ENCODE measurements at regions of chr1 and their contacts with region 1.

Region 1: GRCh38 chr1:167936068-167936929 is at the start of gene DCAF6:
- DNase-seq: peak; percentile 91 to 98
- H3K4me3 ChIP-seq: peak within 1 kb of the TSS; percentile 91
- H3K27ac ChIP-seq: peak within 1 kb of the TSS; percentile 96 to 98
- H3K4me1 ChIP-seq: peaks cover 0 to 14% of the 10 kb centered on the region in 2 donors
- H3K27me3 ChIP-seq: no peaks in the 10 kb centered on the region
- CTCF ChIP-seq: no peak
- total RNA-seq, gene DCAF6: 9.8 TPM

Region 2: GRCh38 chr1:167715157-167715999 is 220.9 kb before region 1 on chr1:
- intact Hi-C with region 1: loop called (anchors 1 kb)
- DNase-seq: peak in 1 of 2 donors; percentile 95
- H3K4me3 ChIP-seq: peak overlapping the region; percentile 46 to 66
- H3K27ac ChIP-seq: peak overlapping the region; percentile 84 to 87
- H3K4me1 ChIP-seq: peaks cover 0 to 5% of the 10 kb centered on the region in 2 donors
- H3K27me3 ChIP-seq: no peaks in the 10 kb centered on the region
- CTCF ChIP-seq: peak; percentile 82 to 87 (median 82)

Region 3: DNA sequence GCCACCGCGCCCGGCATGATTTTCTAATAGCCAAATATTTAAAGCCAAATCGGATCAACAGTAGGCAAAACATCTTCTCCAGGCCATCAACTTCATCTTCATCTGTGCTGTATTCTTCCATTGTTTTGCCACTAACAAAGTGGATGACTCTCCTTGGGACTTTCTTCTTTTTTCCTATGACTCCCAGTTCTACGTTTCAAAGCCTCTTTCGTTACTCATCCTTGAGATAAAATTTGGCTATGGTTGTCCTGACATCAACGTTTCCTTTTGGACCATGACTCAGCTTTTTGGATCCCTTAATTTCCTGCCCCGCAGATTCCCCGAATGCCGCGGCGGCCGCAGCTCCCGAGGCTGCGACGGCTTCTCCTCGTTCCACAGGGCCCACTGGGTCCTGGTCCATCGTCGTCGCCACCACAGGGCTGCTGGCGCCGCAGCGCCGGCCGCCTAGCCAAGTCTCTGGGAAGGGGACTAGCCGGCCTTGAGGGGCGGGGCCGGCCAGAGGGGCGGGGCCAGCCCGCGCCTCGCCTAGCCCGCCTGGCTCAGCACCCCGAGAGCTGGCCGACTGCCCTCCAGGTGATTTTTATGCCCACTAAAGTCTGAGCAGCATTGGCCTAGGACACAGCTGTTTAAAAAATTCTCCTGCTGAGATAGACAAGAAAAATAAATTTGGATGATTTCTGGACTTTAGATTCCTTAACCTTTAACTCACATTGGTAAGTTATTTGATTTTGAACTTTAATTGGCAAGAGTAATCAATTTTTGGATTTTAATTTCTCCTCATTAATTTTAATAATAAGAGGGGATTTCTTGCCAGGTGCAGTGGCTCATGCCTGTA is 116.2 kb before region 1 on chr1:
- intact Hi-C with region 1: loop called (anchors 1 kb)
- DNase-seq: peak; percentile 70 to 93
- H3K4me3 ChIP-seq: peak overlapping the region; percentile 38 to 53
- H3K27ac ChIP-seq: peak overlapping the region; percentile 77 to 86
- H3K4me1 ChIP-seq: peaks cover 0 to 8% of the 10 kb centered on the region in 2 donors
- H3K27me3 ChIP-seq: no peaks in the 10 kb centered on the region
- CTCF ChIP-seq: no peak

Region 4: DNA sequence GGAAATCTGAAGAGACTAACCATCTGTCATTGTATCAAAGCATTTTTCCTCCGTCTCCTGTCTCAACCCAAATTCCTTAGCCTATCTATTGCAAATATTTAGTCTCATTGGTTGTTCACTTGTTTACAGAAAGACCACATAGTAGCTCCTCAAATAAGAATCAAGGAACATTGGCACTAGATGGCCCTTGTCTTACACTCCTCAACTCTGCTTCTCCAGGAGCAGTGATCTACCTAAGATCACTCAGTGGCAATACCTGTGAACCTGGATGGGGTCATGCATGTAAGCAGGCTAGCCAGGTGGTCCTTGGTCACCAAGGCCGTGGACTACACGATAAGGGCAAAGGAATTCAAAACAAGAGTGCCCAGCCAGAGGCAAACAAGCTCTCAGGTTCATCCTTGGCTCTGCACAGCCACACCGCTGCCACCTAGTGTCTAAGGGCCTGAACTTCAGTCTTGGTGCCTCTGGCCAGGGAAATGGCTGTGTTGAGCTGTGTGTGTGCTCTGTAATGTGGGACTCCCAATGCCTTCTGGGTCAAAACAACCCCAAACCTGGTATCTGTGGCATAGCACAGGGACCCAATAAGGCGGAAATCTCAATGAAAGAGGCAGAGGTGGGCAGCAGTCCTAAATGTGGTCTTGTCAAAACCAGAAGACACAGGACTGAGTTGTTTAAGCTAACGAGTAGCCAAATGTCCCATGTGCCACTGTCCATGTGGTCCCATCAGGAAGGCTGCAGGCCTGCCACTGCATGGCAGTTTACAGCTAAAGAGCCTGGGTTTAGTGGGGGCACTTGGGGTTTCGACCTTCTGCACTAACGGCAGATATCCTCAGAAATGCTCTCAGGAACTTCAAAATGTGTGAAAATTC is 145.9 kb after region 1 on chr1:
- intact Hi-C with region 1: loop called (anchors 10 kb)
- DNase-seq: peak in 1 of 2 donors; percentile 86
- H3K4me3 ChIP-seq: no peak overlapping the region
- H3K27ac ChIP-seq: peak overlapping the region; percentile 22 to 70
- H3K4me1 ChIP-seq: peaks cover 6 to 35% of the 10 kb centered on the region in 2 donors
- H3K27me3 ChIP-seq: no peaks in the 10 kb centered on the region
- CTCF ChIP-seq: peak; percentile 75 to 88 (median 86)

Region 5: DNA sequence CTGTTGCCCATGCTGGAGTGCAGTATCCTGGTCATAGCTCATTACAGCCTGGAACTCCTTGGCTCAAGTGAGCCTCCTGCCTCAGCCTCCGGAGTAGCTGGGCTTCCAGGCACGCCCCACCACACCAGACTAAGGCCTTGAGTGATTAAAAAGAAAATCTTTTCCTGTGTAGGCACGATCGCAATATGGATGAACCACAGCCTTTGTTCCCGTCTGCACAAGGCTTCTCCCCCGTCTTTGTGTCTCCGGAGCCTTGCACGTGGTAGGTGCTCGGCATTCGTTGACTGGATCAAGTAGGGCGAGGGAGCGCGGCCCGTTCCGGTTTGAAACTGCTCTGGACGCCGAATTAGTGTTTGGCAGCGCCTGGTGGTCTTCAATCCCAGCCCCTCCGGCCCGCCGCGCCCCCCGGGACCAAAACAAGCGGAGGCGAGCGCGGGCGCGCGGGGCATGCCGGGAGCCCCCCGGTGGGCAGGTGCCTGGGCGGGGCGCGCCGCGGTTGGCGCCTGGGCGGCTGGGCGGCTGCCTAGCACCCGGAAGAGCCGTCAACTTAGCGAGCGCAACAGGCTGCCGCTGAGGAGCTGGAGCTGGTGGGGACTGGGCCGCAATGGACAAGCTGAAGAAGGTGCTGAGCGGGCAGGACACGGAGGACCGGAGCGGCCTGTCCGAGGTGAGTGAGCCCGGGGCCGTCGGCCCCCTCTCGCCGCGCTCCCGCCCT is 289.3 kb after region 1 on chr1 and contains the start of gene SFT2D2:
- intact Hi-C with region 1: loop called (anchors 5 kb)
- DNase-seq: peak; percentile 21 to 90
- H3K4me3 ChIP-seq: peak within 1 kb of the TSS; percentile 85 to 93
- H3K27ac ChIP-seq: peak within 1 kb of the TSS; percentile 92 to 98
- H3K4me1 ChIP-seq: peaks cover 3 to 20% of the 10 kb centered on the region in 2 donors
- H3K27me3 ChIP-seq: no peaks in the 10 kb centered on the region
- CTCF ChIP-seq: no peak
- total RNA-seq, gene SFT2D2: 40.1 TPM

Measured in ascending aorta (tissue), 2 donors.